ENCODE measurements at regions of chr15 and their contacts with region 1.

Region 1: GRCh38 chr15:47870956-47871625 is 153.8 kb downstream of the SEMA6D start:
- DNase-seq: no peak
- ATAC-seq: peak in 3 of 8 donors; percentile 19 to 59 (median 47)
- H3K4me3 ChIP-seq: no peak overlapping the region
- H3K27ac ChIP-seq: no peak overlapping the region
- H3K4me1 ChIP-seq: peaks cover 0 to 32% (median 12%) of the 10 kb centered on the region in 9 donors
- H3K27me3 ChIP-seq: no peaks in the 10 kb centered on the region
- CTCF ChIP-seq: no peak

Region 2: GRCh38 chr15:48273037-48273436 is 401.9 kb after region 1 on chr15:
- intact Hi-C with region 1: no loop called
- DNase-seq: no peak
- ATAC-seq: no peak
- H3K4me3 ChIP-seq: no peak overlapping the region
- H3K27ac ChIP-seq: no peak overlapping the region
- H3K4me1 ChIP-seq: no peaks in the 10 kb centered on the region
- H3K27me3 ChIP-seq: peaks cover 0 to 16% (median 5%) of the 10 kb centered on the region in 7 donors
- CTCF ChIP-seq: no peak

Region 3: DNA sequence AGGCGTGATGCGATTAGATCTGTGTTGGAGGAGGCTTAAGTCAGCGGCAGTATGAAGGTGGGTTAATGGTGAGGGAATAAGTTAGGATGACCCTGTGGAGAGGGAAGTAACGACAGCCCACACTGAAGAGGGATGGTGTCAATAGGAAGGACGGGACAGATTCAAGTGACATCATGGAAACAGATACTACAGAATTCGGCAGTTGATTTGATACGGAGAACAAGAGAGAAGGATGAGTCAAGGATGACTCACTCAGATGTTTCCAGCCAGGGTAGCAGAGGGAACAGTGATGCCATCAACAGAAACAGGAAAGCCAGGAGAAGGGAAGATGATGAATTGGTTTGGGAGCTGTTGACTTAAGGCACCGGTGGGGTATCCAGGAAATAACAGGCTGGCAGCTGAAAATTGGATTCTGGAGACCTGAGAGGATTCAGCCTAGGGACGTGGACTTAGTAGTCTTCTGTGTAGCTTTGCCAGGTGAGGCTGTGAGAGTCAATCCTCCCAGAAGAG is 1054.7 kb after region 1 on chr15:
- intact Hi-C with region 1: loop called in 1 of 10 experiments (anchors 5 kb)
- DNase-seq: no peak
- ATAC-seq: peak in 3 of 8 donors; percentile 38 to 75 (median 60)
- H3K4me3 ChIP-seq: no peak overlapping the region
- H3K27ac ChIP-seq: no peak overlapping the region
- H3K4me1 ChIP-seq: peaks cover 0 to 7% (median 0%) of the 10 kb centered on the region in 9 donors
- H3K27me3 ChIP-seq: no peaks in the 10 kb centered on the region
- CTCF ChIP-seq: no peak